Activated CD4-positive, alpha-beta memory T cell treated with anti-CD3 and anti-CD28 coated beads, Interleukin-2, amount 10 ng/mL, durations not matched to agents 7 days and 5 days (primary cell): ENCODE measurements at regions of chr6 and their contacts with region 1.

Region 1: GRCh38 chr6:24431045-24431451 is 28.3 kb downstream of the MRS2 start:
- DNase-seq: no peak
- H3K4me3 Mint-ChIP-seq: no peak overlapping the region
- H3K27ac Mint-ChIP-seq: no peak overlapping the region
- H3K4me1 Mint-ChIP-seq: no peaks in the 10 kb centered on the region
- H3K27me3 Mint-ChIP-seq: no peaks in the 10 kb centered on the region

Region 2: DNA sequence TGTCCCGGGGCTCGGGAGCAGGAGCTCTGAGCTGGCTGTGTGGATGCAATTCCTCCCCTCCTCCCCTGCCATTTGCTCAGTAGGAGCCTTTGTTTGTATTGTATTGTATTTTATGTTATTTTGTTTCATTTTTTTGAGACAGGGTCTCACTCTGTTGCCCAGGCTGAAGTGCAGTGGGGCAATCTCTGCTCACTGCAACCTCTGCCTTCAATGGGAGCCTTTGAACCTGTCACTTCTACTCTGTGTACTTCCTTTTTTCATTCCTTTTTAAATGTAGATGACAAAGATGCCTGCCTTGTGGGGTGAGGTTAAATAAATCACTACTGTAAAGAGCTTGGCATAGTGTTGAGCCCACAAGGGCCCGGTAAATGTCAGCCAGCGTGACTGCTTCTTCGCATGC is 143.8 kb before region 1 on chr6:
- CTCF ChIA-PET with region 1: no interaction called
- POLR2A ChIA-PET with region 1: no interaction called
- DNase-seq: no peak
- H3K4me3 Mint-ChIP-seq: no peak overlapping the region
- H3K27ac Mint-ChIP-seq: no peak overlapping the region
- H3K4me1 Mint-ChIP-seq: peaks cover 7% of the 10 kb centered on the region
- H3K27me3 Mint-ChIP-seq: no peaks in the 10 kb centered on the region

Region 3: GRCh38 chr6:24441599-24441904 is 10.5 kb after region 1 on chr6:
- CTCF ChIA-PET with region 1: interaction called, 12 read pairs
- POLR2A ChIA-PET with region 1: no interaction called
- DNase-seq: no peak
- H3K4me3 Mint-ChIP-seq: no peak overlapping the region
- H3K27ac Mint-ChIP-seq: no peak overlapping the region
- H3K4me1 Mint-ChIP-seq: no peaks in the 10 kb centered on the region
- H3K27me3 Mint-ChIP-seq: no peaks in the 10 kb centered on the region